ENCODE measurements at regions of chr15 and their contacts with region 1.

Region 1: GRCh38 chr15:33737687-33738601 is 230.4 kb upstream of the CHRM5 start:
- DNase-seq: peak; percentile 15 to 79
- H3K4me3 ChIP-seq: peak overlapping the region; percentile 16 to 58 (median 30); a peak in 6 of 8 replicates
- H3K27ac ChIP-seq: no peak overlapping the region
- H3K4me1 ChIP-seq: peaks cover 0 to 6% (median 3%) of the 10 kb centered on the region in 4 experiments; a peak in 2 of 7 replicates
- H3K27me3 ChIP-seq: 0 out of 7 replicates have a peak, but pooled peaks cover 0 to 4% (median 0%) of the 10 kb centered on the region in 4 experiments
- CTCF ChIP-seq: peak; percentile 55 to 77 (median 72)
- EP300 ChIP-seq: no peak
- POLR2A ChIP-seq: no peak
- RAD21 ChIP-seq: peak; percentile 64 to 79

Region 2: GRCh38 chr15:33623010-33623409 is 114.9 kb before region 1 on chr15:
- CTCF ChIA-PET with region 1: no interaction called
- POLR2A ChIA-PET with region 1: no interaction called
- DNase-seq: no peak
- H3K4me3 ChIP-seq: no peak overlapping the region
- H3K27ac ChIP-seq: no peak overlapping the region
- H3K4me1 ChIP-seq: no peaks in the 10 kb centered on the region; a peak in 1 of 7 replicates
- H3K27me3 ChIP-seq: no peaks in the 10 kb centered on the region
- CTCF ChIP-seq: peak; percentile 45 to 75 (median 52)
- EP300 ChIP-seq: no peak
- POLR2A ChIP-seq: no peak
- RAD21 ChIP-seq: peak; percentile 55 to 65

Region 3: GRCh38 chr15:33756961-33757360 is 19.0 kb after region 1 on chr15:
- CTCF ChIA-PET with region 1: interaction called, 13 read pairs
- POLR2A ChIA-PET with region 1: no interaction called
- DNase-seq: no peak
- H3K4me3 ChIP-seq: no peak overlapping the region
- H3K27ac ChIP-seq: no peak overlapping the region
- H3K4me1 ChIP-seq: no peaks in the 10 kb centered on the region
- H3K27me3 ChIP-seq: no peaks in the 10 kb centered on the region
- CTCF ChIP-seq: no peak
- EP300 ChIP-seq: no peak
- POLR2A ChIP-seq: no peak
- RAD21 ChIP-seq: no peak

Region 4: DNA sequence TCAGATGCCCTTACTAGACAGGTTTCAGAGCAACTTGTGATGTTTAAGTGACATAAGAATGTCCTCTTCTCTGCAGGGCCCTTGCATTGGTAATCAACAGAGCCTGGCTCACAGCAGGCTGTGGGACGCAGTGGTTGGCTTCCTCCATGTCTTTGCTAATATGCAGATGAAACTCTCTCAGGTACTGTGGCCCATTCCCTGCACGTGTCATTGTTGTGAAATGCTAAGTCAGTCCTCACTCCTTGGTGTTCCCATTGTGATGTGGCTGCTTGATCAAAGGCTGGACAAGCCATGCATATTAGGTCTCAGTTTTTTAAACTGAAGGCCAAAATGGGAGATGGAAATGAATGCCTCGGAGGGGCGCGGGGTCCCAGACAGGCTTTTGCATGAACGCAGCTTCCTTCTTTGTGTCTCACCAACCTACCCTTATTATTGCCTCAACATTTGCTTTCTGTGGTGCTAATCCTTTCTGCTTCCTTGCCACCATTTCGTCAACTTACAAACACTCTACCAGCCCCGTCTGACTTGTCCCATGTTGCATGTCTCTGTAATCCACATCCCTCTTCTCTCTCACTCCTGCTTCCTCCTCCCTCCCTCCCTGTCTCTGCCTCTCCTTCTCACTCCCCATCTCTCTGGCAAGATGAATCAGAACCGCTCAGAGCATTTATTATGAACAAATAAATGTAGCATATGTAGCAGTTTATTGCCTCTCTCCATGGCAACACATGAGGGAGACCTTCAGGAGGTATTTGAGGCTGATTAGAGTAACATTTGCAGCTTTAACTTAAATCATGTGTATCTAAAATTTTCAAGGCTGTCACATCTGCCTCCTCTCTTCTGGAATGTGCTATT is 97.2 kb after region 1 on chr15:
- CTCF ChIA-PET with region 1: interaction called, 13 read pairs
- POLR2A ChIA-PET with region 1: no interaction called
- DNase-seq: peak; percentile 13 to 52
- H3K4me3 ChIP-seq: no peak overlapping the region; a peak in 1 of 8 replicates
- H3K27ac ChIP-seq: no peak overlapping the region
- H3K4me1 ChIP-seq: peaks cover 3 to 11% (median 9%) of the 10 kb centered on the region in 4 experiments; a peak in 6 of 7 replicates
- H3K27me3 ChIP-seq: no peaks in the 10 kb centered on the region
- CTCF ChIP-seq: no peak
- EP300 ChIP-seq: no peak
- POLR2A ChIP-seq: no peak
- RAD21 ChIP-seq: no peak

Region 5: GRCh38 chr15:33985290-33985689 is 247.3 kb after region 1 on chr15:
- CTCF ChIA-PET with region 1: interaction called, 13 read pairs
- POLR2A ChIA-PET with region 1: no interaction called
- DNase-seq: peak in 1 of 2 experiments; percentile 13
- H3K4me3 ChIP-seq: no peak overlapping the region
- H3K27ac ChIP-seq: no peak overlapping the region
- H3K4me1 ChIP-seq: peaks cover 0 to 5% (median 0%) of the 10 kb centered on the region in 4 experiments; a peak in 1 of 7 replicates
- H3K27me3 ChIP-seq: no peaks in the 10 kb centered on the region
- CTCF ChIP-seq: no peak
- EP300 ChIP-seq: no peak
- POLR2A ChIP-seq: no peak
- RAD21 ChIP-seq: no peak

Measured in H1 (cell line).